ENCODE measurements at regions of chr21 and their contacts with region 1.

Region 1: GRCh38 chr21:45140346-45140940 is 66.1 kb downstream of the ADARB1 start:
- DNase-seq: peak; percentile 79
- ATAC-seq: peak; percentile 96
- H3K4me3 ChIP-seq: no peak overlapping the region
- H3K27ac ChIP-seq: no peak overlapping the region
- H3K4me1 ChIP-seq: peaks cover 10 to 24% of the 10 kb centered on the region in 2 experiments; a peak in 3 of 4 replicates
- H3K27me3 ChIP-seq: no peaks in the 10 kb centered on the region
- CTCF ChIP-seq: peak; percentile 86 to 93 (median 88)
- POLR2A ChIP-seq: no peak
- RAD21 ChIP-seq: peak; percentile 89

Region 2: GRCh38 chr21:44510508-44511210 is 629.8 kb before region 1 on chr21:
- CTCF ChIA-PET with region 1: interaction called, 7 read pairs
- POLR2A ChIA-PET with region 1: no interaction called
- RAD21 ChIA-PET with region 1: no interaction called
- intact Hi-C with region 1: loop called (anchors 10 kb)
- DNase-seq: peak; percentile 29
- ATAC-seq: peak; percentile 93
- H3K4me3 ChIP-seq: peak overlapping the region; percentile 23 to 29
- H3K27ac ChIP-seq: no peak overlapping the region
- H3K4me1 ChIP-seq: peaks cover 9 to 15% of the 10 kb centered on the region in 2 experiments
- H3K27me3 ChIP-seq: no peaks in the 10 kb centered on the region
- CTCF ChIP-seq: peak in 2 of 3 experiments; percentile 89 to 95; a peak in 4 of 6 replicates
- POLR2A ChIP-seq: no peak
- RAD21 ChIP-seq: no peak

Region 3: DNA sequence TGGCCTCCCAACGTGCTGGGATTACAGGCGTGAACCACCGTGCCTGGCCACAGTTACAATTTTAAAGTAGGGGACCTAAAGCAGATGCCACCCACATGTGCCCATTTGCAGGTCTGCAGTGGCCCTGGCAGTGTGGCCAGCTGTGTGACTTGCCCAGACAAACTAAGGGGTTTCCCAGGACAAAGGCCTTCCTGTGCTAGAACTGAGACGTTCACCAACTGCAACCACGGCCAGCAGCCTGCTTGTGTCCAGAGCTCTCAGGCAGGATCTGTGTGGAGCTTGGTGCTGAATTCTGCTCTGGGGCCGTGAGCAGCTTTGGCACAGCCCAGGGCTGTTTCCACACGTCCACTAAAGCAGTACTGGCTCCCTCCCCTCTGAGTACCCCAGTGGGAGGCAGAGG is 256.3 kb before region 1 on chr21:
- CTCF ChIA-PET with region 1: no interaction called
- POLR2A ChIA-PET with region 1: no interaction called
- RAD21 ChIA-PET with region 1: no interaction called
- intact Hi-C with region 1: no loop called
- DNase-seq: no peak
- ATAC-seq: no peak
- H3K4me3 ChIP-seq: no peak overlapping the region
- H3K27ac ChIP-seq: no peak overlapping the region
- H3K4me1 ChIP-seq: peaks cover 0 to 3% of the 10 kb centered on the region in 2 experiments; a peak in 1 of 4 replicates
- H3K27me3 ChIP-seq: peaks cover 4% of the 10 kb centered on the region; the same call in 1 of the 2 replicates
- CTCF ChIP-seq: no peak
- POLR2A ChIP-seq: no peak
- RAD21 ChIP-seq: no peak

Region 4: DNA sequence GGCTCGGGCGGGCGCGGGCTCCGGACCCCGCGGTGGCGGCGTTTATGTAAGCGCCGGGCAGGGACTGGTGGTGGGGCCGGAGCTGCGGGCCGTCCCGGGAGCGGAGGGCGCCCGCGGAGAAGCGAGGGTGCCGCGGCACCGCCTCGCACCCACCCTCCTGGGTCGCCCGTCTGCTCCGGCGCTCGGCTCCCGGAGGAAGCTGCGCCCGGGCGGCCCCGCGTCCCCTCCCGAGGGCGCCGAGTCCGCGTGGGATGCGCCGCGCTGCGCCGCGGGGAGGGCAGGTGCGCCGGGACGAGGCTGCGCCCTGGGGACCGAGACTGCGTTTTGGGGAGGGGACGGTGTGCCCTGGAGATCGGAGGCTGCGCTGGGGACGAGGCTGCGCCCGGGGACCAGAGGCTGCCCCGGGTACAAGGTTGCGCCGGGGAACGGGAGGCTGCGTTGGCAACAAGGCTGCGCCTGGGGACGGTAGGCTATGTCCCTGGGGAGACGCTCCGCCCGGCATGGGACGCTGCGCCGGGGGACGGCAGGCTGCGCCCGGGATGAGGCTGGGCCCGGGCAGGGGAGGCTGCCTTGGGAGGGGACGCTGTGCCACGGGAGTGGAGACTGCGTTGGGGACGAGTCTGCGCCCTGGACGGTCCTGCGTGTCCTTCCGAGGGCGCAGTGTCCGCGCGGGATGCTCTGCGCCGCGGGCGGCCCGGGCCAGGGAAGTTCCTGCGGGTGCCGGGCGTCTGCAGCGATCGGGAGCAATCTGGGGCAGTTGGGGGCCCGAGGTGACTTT is 65.4 kb before region 1 on chr21:
- CTCF ChIA-PET with region 1: interaction called, 11 read pairs
- POLR2A ChIA-PET with region 1: no interaction called
- RAD21 ChIA-PET with region 1: no interaction called
- intact Hi-C with region 1: no loop called
- DNase-seq: no peak
- ATAC-seq: peak; percentile 35
- H3K4me3 ChIP-seq: peak overlapping the region; percentile 62 to 74
- H3K27ac ChIP-seq: peak overlapping the region; percentile 83
- H3K4me1 ChIP-seq: peaks cover 7 to 14% of the 10 kb centered on the region in 2 experiments
- H3K27me3 ChIP-seq: no peaks in the 10 kb centered on the region
- CTCF ChIP-seq: no peak
- POLR2A ChIP-seq: no peak
- RAD21 ChIP-seq: no peak

Region 5: GRCh38 chr21:45167796-45168222 is 27.4 kb after region 1 on chr21:
- CTCF ChIA-PET with region 1: interaction called, 10 read pairs
- POLR2A ChIA-PET with region 1: no interaction called
- RAD21 ChIA-PET with region 1: no interaction called
- intact Hi-C with region 1: no loop called
- DNase-seq: no peak
- ATAC-seq: no peak
- H3K4me3 ChIP-seq: no peak overlapping the region
- H3K27ac ChIP-seq: no peak overlapping the region
- H3K4me1 ChIP-seq: no peaks in the 10 kb centered on the region; a peak in 2 of 4 replicates
- H3K27me3 ChIP-seq: no peaks in the 10 kb centered on the region
- CTCF ChIP-seq: no peak
- POLR2A ChIP-seq: no peak
- RAD21 ChIP-seq: no peak

Region 6: DNA sequence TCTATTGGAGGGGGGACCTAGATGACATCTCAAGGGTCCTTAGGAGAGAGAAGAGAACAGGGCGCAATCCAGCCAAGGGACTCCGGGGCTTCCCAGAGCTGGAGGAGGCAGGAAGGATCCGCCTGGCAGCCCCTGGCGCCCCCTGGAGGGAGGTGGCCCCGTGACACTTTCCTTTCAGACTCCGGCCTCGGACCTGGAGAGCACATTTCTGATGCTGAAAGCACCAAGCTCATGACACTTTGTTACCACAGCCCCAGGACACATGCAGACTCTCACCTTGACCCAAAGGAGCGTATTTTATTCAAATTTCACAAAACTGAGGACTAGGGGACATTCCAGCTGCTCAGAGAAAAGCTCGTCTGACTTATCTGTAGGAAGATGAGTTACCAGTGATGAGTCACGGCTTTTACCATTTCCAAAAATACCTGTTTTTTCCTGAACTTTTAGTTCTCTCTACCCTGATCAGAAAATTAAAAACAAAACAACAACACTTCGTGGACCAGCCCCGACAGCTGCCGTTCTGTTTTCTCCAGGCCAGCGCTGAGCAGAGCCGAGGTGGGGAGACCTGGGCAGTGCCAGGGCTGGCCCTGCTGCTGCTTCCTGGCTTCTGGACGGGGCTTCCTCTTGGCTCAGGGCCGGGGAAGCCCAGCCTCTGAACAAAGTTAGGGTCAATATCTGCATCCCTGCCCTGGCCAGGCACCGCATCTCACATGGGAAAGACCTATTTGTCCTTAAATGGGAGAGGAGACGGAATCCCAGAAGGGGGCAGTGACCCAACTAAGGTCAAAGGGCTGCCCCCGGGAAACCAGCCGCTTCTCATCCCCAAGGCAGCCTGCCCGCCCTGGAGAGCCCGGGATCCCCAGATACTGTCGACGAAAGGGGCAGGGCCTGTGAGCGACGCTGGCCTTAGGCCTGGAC is 168.9 kb after region 1 on chr21:
- CTCF ChIA-PET with region 1: interaction called, 18 read pairs
- POLR2A ChIA-PET with region 1: no interaction called
- RAD21 ChIA-PET with region 1: no interaction called
- intact Hi-C with region 1: no loop called
- DNase-seq: no peak
- ATAC-seq: peak; percentile 96
- H3K4me3 ChIP-seq: no peak overlapping the region
- H3K27ac ChIP-seq: no peak overlapping the region; the same call in 1 of the 2 replicates
- H3K4me1 ChIP-seq: peaks cover 0 to 27% of the 10 kb centered on the region in 2 experiments
- H3K27me3 ChIP-seq: no peaks in the 10 kb centered on the region
- CTCF ChIP-seq: peak in 2 of 3 experiments; percentile 88 to 93; a peak in 4 of 6 replicates
- POLR2A ChIP-seq: no peak
- RAD21 ChIP-seq: no peak

Region 7: GRCh38 chr21:45596704-45597318 is 456.4 kb after region 1 on chr21:
- CTCF ChIA-PET with region 1: no interaction called
- POLR2A ChIA-PET with region 1: no interaction called
- RAD21 ChIA-PET with region 1: no interaction called
- intact Hi-C with region 1: loop called (anchors 2 kb)
- DNase-seq: peak; percentile 48
- ATAC-seq: peak; percentile 98
- H3K4me3 ChIP-seq: no peak overlapping the region
- H3K27ac ChIP-seq: no peak overlapping the region
- H3K4me1 ChIP-seq: peaks cover 0 to 10% of the 10 kb centered on the region in 2 experiments; a peak in 2 of 4 replicates
- H3K27me3 ChIP-seq: no peaks in the 10 kb centered on the region
- CTCF ChIP-seq: peak; percentile 85 to 93 (median 89)
- POLR2A ChIP-seq: no peak
- RAD21 ChIP-seq: peak; percentile 68